ENCODE measurements at regions of chr1 and their contacts with region 1.

Region 1: GRCh38 chr1:172745014-172745413 is 86.1 kb downstream of the FASLG start:
- DNase-seq: peak; percentile 71
- ATAC-seq: peak; percentile 64
- H3K4me3 ChIP-seq: no peak overlapping the region
- H3K27ac ChIP-seq: no peak overlapping the region
- H3K4me1 ChIP-seq: peaks cover 21 to 29% of the 10 kb centered on the region in 2 experiments
- H3K27me3 ChIP-seq: no peaks in the 10 kb centered on the region
- CTCF ChIP-seq: peak; percentile 62 to 83 (median 80)
- POLR2A ChIP-seq: no peak
- RAD21 ChIP-seq: peak; percentile 99

Region 2: DNA sequence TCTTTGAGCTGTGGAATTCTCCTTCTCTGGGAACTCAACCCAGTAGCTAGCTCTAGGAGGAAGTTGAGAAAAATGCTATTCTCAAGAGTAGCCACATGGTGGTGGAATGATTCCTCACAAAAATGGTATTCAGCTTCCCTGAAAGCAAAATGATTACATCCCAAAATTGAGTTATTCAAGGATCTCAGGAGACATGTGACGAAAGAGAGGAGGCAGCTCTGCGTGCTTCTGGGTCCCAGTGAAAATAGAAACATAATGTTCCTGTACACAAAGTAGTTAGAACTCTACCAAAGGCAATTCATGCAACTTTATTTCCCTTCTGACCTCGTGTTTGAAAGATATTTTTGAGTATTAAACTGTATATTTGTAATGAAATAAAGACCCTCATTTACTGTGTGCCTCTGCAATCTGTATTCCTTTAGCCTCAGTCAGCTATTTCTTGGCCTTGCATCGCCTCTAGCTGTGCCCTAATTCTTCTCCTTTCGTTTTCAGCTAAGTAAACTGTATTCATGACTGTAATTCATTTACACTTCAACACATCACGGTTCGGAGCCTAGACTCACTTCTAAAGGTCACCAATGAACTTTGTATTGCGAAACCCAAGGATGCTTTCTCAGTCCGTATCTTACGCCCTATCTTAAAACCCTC is 81.2 kb after region 1 on chr1:
- CTCF ChIA-PET with region 1: interaction called, 10 read pairs
- POLR2A ChIA-PET with region 1: no interaction called
- RAD21 ChIA-PET with region 1: interaction called in 1 of 2 experiments, 5 read pairs
- intact Hi-C with region 1: loop called (anchors 2 kb)
- DNase-seq: peak; percentile 61
- ATAC-seq: peak; percentile 85
- H3K4me3 ChIP-seq: no peak overlapping the region
- H3K27ac ChIP-seq: peak overlapping the region; percentile 48; the same call in 1 of the 2 replicates
- H3K4me1 ChIP-seq: peaks cover 10 to 41% of the 10 kb centered on the region in 2 experiments
- H3K27me3 ChIP-seq: no peaks in the 10 kb centered on the region
- CTCF ChIP-seq: peak; percentile 40 to 80 (median 66); a peak in 5 of 6 replicates
- POLR2A ChIP-seq: no peak
- RAD21 ChIP-seq: peak; percentile 95

Region 3: GRCh38 chr1:172845371-172845770 is 100.4 kb after region 1 on chr1:
- CTCF ChIA-PET with region 1: no interaction called
- POLR2A ChIA-PET with region 1: no interaction called
- RAD21 ChIA-PET with region 1: no interaction called
- intact Hi-C with region 1: no loop called
- DNase-seq: no peak
- ATAC-seq: peak; percentile 59
- H3K4me3 ChIP-seq: no peak overlapping the region
- H3K27ac ChIP-seq: peak overlapping the region; percentile 46
- H3K4me1 ChIP-seq: peaks cover 33 to 34% of the 10 kb centered on the region in 2 experiments; a peak in 3 of 4 replicates
- H3K27me3 ChIP-seq: no peaks in the 10 kb centered on the region
- CTCF ChIP-seq: no peak
- POLR2A ChIP-seq: no peak
- RAD21 ChIP-seq: no peak

Region 4: DNA sequence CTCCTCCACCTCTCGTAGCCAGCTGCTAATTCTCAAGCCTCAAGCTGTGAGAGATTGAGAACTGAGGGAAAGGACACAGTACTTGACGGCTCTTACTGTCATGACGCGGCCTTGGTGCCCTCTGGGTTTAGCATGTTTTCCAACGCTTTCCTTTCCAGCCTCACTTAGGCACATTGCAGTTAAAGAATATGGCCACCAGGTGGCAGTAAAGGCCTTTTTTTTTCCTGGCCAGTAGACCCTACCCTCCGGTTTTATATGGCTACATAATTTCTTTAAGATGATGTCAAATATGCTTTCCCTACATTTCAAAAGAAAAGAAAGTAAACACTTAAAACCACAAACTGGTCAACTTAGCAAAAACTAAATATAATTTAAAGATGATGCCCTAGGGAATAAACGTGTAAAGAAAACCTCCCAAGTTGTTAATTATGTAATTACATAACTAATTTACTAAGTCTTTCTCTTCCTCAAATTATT is 675.4 kb after region 1 on chr1:
- CTCF ChIA-PET with region 1: interaction called, 4 read pairs
- POLR2A ChIA-PET with region 1: no interaction called
- RAD21 ChIA-PET with region 1: no interaction called
- intact Hi-C with region 1: loop called (anchors 2 kb)
- DNase-seq: peak; percentile 76
- ATAC-seq: peak; percentile 89
- H3K4me3 ChIP-seq: no peak overlapping the region
- H3K27ac ChIP-seq: no peak overlapping the region
- H3K4me1 ChIP-seq: peaks cover 2 to 27% of the 10 kb centered on the region in 2 experiments; a peak in 3 of 4 replicates
- H3K27me3 ChIP-seq: no peaks in the 10 kb centered on the region
- CTCF ChIP-seq: peak; percentile 61 to 91 (median 80)
- POLR2A ChIP-seq: no peak
- RAD21 ChIP-seq: peak; percentile 96

Region 5: GRCh38 chr1:174074757-174075156 is 1329.7 kb after region 1 on chr1:
- CTCF ChIA-PET with region 1: no interaction called
- POLR2A ChIA-PET with region 1: no interaction called
- RAD21 ChIA-PET with region 1: no interaction called
- intact Hi-C with region 1: loop called (anchors 10 kb)
- DNase-seq: no peak
- ATAC-seq: peak; percentile 66; the same call in 1 of the 2 replicates
- H3K4me3 ChIP-seq: no peak overlapping the region
- H3K27ac ChIP-seq: no peak overlapping the region
- H3K4me1 ChIP-seq: peaks cover 0 to 7% of the 10 kb centered on the region in 2 experiments; a peak in 2 of 4 replicates
- H3K27me3 ChIP-seq: no peaks in the 10 kb centered on the region
- CTCF ChIP-seq: peak; percentile 18 to 71 (median 57); a peak in 3 of 6 replicates
- POLR2A ChIP-seq: no peak
- RAD21 ChIP-seq: peak; percentile 81

Region 6: DNA sequence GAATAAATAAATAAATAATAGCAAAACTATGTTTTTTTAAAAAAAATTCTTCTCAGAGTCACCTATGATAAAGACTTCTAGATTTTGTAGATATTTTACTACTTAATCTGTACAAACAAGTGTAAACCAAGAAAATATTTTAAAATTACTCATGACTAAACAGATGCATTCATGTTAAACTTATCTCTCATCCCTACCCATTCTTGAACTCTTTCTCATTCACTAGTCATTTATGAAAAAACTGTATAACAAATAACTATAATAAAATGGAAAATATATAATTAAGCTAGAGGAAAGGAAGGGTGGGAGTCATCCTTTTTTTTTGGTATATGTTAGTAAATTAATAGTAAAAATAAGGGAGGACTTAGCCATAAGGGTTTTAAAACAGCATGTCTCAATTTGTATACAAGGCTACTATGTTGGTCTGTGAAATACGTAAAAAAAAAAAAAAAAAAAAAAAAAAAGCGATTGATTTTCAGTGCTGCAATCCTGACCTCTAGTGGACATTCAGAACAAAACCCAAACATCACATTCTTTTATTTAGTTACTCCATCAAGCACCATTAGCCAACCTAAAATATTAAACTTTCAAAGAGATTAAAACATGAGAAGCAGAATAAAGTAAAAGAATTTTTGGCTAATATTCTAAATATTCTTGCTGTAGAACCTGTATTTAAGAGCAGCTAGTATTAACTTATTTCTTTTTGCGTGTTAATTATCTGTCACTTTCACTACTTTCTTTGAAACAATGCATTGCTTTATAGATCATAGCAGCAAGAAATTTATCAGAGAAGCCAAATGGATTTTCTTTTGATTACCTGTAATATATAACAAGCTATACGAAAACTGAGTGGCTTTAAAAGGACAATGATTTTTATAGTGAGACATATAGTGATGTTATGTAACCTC is 1998.9 kb after region 1 on chr1:
- CTCF ChIA-PET with region 1: no interaction called
- POLR2A ChIA-PET with region 1: no interaction called
- RAD21 ChIA-PET with region 1: no interaction called
- intact Hi-C with region 1: loop called (anchors 10 kb)
- DNase-seq: peak; percentile 28
- ATAC-seq: no peak; the same call in 1 of the 2 replicates
- H3K4me3 ChIP-seq: no peak overlapping the region
- H3K27ac ChIP-seq: no peak overlapping the region
- H3K4me1 ChIP-seq: no peaks in the 10 kb centered on the region
- H3K27me3 ChIP-seq: no peaks in the 10 kb centered on the region
- CTCF ChIP-seq: peak; percentile 53 to 75 (median 60); a peak in 5 of 6 replicates
- POLR2A ChIP-seq: no peak
- RAD21 ChIP-seq: peak; percentile 78